Aorta (tissue), 5 donors: ENCODE measurements at regions of chr6 and their contacts with region 1.

Region 1: DNA sequence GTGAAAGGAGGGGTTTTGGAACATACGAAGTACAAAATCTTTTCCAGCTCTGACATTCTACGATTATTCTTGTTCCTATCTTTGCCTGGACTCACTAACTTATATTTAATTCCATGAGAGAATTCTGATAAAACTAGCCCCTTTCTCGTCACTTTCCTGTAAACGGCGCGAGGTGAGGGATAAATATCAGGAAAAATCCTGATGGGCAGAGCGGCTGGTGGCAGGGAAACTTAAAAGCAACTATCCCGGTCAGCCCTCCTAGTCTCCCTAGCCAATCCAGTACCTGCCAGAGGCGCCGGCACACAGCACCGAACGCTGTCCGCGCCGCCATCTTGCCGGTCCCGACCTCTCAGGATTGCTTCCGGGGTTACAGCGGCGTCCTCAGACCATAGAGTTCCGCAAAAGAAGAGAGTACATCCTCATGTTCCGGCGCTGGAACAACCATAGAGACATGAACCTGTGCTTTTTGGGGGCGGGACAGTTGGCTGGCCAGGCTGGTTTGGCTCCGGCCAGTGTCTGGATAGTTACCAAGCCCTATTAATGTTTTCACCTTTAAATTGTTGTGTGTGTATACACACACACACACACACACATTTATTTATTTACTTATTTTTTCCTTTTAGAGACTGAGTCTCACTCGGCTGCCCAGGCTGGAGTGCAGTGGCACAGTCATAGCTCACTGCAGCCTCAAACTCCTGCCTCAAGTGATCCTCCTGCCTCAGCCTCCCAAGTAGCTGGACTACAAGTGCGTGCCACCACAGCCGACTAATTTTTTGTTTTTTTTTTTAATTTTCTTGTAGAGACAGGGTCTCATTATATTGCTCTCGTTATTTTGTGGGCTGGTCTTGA is at the start of gene MRPS10:
- DNase-seq: peak; percentile 94 to 96
- ATAC-seq: peak; percentile 99
- H3K4me3 ChIP-seq: peak within 1 kb of the TSS; percentile 72 to 88
- H3K27ac ChIP-seq: no peak within 1 kb of the TSS
- H3K4me1 ChIP-seq: no peaks in the 10 kb centered on the region
- H3K27me3 ChIP-seq: no peaks in the 10 kb centered on the region
- total RNA-seq, gene MRPS10: 20.2 to 24.3 TPM

Region 2: DNA sequence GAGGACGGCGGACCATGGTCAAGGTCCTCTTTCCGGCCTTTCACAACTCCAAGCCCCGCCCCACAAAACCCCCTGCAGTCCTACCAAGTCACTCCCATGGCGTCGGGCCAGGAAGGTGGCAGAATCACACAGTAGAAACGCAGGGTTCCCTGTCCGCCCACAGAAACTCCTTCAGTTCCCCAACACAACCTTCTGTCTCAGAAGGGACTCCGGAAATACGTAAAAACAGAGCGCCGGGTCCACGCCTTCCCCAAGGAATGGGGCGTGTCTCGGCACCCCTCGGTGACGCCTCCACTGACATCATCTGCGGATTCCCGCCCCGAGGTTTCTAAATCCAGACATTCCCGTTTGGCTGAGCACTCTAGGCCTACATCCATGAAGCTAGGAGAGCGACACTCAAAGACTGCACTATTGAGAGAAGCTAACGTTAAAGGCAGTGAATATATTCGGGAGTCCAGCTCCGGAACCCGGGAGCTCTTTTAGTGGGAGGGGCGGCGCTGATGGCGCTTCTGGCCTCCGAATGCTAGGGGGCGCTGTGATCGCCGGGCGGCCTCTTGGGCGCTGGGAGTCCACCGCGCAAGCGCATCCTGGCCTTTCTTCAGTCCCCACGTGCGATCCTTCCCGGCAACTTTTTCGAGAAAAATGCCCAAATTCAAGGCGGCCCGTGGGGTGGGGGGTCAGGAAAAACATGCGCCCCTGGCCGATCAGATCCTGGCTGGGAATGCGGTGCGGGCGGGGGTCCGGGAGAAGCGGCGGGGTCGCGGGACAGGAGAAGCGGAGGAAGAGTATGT is 296.6 kb before region 1 on chr6 and contains the starts of genes BYSL and MED20:
- intact Hi-C with region 1: loop called in 1 of 2 experiments (anchors 10 kb)
- DNase-seq: peak; percentile 96 to 97
- ATAC-seq: peak; percentile 98
- H3K4me3 ChIP-seq: peak within 1 kb of the TSS; percentile 52 to 90
- H3K27ac ChIP-seq: peak within 1 kb of the TSS; percentile 17 to 89
- H3K4me1 ChIP-seq: peaks cover 0 to 7% of the 10 kb centered on the region in 2 donors
- H3K27me3 ChIP-seq: no peaks in the 10 kb centered on the region
- total RNA-seq, gene BYSL: 9.7 to 12.0 TPM
- total RNA-seq, gene MED20: 11.7 to 16.1 TPM

Region 3: GRCh38 chr6:42175860-42176259 is 41.9 kb before region 1 on chr6:
- intact Hi-C with region 1: no loop called
- DNase-seq: no peak
- ATAC-seq: no peak
- H3K4me3 ChIP-seq: no peak overlapping the region
- H3K27ac ChIP-seq: no peak overlapping the region
- H3K4me1 ChIP-seq: no peaks in the 10 kb centered on the region
- H3K27me3 ChIP-seq: no peaks in the 10 kb centered on the region

Region 4: GRCh38 chr6:42453031-42453653 is 235.4 kb after region 1 on chr6:
- intact Hi-C with region 1: loop called in 1 of 2 experiments (anchors 5 kb)
- DNase-seq: peak; percentile 93 to 94
- ATAC-seq: peak; percentile 94
- H3K4me3 ChIP-seq: peak overlapping the region; percentile 66 to 84
- H3K27ac ChIP-seq: peak overlapping the region; percentile 2 to 23
- H3K4me1 ChIP-seq: no peaks in the 10 kb centered on the region
- H3K27me3 ChIP-seq: no peaks in the 10 kb centered on the region

Region 5: GRCh38 chr6:42547407-42548329 is 329.9 kb after region 1 on chr6:
- intact Hi-C with region 1: loop called in 1 of 2 experiments (anchors 5 kb)
- DNase-seq: peak; percentile 89 to 94
- ATAC-seq: peak; percentile 98
- H3K4me3 ChIP-seq: peak overlapping the region; percentile 57
- H3K27ac ChIP-seq: peak overlapping the region in 1 of 2 donors; percentile 23
- H3K4me1 ChIP-seq: no peaks in the 10 kb centered on the region
- H3K27me3 ChIP-seq: no peaks in the 10 kb centered on the region